ENCODE measurements at regions of chr19 and their contacts with region 1.

Region 1: GRCh38 chr19:19546751-19547176 is 8.7 kb downstream of the CILP2 start:
- DNase-seq: peak in 1 of 2 experiments; percentile 81
- H3K4me3 ChIP-seq: no peak overlapping the region
- H3K27ac ChIP-seq: no peak overlapping the region
- H3K4me1 ChIP-seq: peaks cover 11% of the 10 kb centered on the region
- H3K27me3 ChIP-seq: no peaks in the 10 kb centered on the region
- CTCF ChIP-seq: no peak

Region 2: DNA sequence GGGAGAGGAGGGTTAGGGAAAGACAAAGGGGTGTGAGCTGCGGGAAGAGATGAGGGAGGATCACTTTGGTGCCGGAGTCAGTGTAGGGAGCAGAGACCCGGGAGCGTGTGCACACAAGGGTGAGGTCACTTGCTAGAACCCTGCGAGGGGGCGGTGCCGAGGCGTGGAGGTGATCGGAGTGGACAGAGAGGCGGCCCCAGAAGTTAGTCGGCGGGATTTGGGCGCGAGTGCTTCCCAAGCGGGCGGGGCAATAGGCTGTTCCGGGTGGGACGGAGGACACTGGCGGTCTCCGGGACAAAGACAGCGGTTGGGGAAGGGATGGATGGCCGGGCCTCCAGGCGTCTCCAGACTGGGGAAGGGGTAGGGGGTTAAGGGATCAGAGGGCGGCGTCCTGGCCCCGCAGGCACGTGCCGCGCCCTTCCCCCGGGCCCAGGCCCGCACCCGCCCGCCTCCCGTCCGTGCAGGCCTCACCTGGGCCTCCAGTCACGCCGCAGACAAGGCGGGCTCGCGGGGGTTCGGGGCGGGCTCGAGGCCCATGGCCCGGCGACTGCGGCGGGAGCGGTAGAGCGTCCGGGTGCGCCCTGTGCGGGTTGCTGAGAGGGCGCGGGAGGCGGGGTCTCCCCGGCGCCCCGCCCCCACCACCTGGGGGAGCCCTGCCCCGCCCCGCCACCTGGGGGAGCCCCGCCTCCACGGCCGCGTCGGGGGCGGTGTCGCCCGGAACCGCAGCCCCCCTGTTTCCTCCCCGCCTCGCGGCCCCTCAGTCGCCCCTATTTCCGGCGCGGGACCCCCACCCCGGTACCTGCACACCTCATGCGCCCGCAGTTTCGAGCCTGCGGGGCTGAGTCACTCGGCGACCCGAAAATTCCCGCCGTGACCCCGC is 81.1 kb after region 1 on chr19 and contains the start of gene LPAR2:
- CTCF ChIA-PET with region 1: interaction called, 3 read pairs
- POLR2A ChIA-PET with region 1: no interaction called
- intact Hi-C with region 1: loop called (anchors 2 kb)
- DNase-seq: peak; percentile 44 to 71
- H3K4me3 ChIP-seq: peak within 1 kb of the TSS; percentile 68
- H3K27ac ChIP-seq: peak within 1 kb of the TSS; percentile 84
- H3K4me1 ChIP-seq: peaks cover 5% of the 10 kb centered on the region; the same call in 1 of the 2 replicates
- H3K27me3 ChIP-seq: no peaks in the 10 kb centered on the region
- CTCF ChIP-seq: no peak; the same call in 1 of the 2 replicates
- total RNA-seq, gene LPAR2: 27.4 and 29.2 TPM in 2 replicates

Measured in PC-9 (cell line).